Activated B cell treated with CpG ODN at 0.5 μM for 24 hours (primary cell): ENCODE measurements at regions of chr10 and their contacts with region 1.

Region 1: DNA sequence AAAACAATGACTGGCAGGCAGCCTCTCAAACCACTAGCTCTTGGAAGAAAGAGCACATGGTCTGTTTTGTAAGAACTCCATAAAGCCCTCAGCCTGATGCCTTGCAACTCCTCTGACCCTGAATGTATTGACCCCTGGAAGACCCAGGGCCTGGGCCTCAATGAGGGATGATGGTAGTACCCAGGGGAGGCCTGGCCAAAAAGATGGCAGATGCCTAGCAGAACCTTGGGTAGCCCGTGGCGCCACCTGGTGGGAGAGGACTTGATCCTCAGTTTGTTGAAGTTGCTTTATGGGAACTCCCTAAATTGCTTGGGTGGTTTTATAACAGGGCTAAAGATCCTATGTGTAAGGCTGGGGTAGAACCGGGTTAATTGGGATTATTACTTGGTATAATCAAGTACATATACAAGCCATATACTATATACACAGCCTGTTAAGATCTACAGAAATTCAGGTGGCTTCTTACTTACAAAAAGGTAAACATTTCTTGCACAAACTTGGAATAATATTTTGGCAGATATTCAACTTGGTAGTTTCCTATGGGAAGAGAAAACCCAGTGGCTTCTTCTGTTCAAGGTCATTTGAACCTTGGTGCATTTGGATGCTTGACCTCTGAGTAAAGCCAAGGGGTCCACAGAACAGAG is 95.8 kb upstream of the CACUL1 start:
- DNase-seq: peak; percentile 25
- ATAC-seq: no peak
- H3K4me3 Mint-ChIP-seq: no peak overlapping the region
- H3K27ac Mint-ChIP-seq: no peak overlapping the region
- H3K4me1 Mint-ChIP-seq: no peaks in the 10 kb centered on the region
- H3K27me3 Mint-ChIP-seq: no peaks in the 10 kb centered on the region
- CTCF ChIP-seq: no peak

Region 2: GRCh38 chr10:118720685-118721538 is 129.6 kb before region 1 on chr10:
- CTCF ChIA-PET with region 1: no interaction called
- POLR2A ChIA-PET with region 1: no interaction called
- intact Hi-C with region 1: loop called (anchors 2 kb)
- DNase-seq: no peak
- ATAC-seq: peak; percentile 56
- H3K4me3 Mint-ChIP-seq: no peak overlapping the region
- H3K27ac Mint-ChIP-seq: no peak overlapping the region
- H3K4me1 Mint-ChIP-seq: peaks cover 8% of the 10 kb centered on the region
- H3K27me3 Mint-ChIP-seq: no peaks in the 10 kb centered on the region
- CTCF ChIP-seq: peak; percentile 72

Region 3: GRCh38 chr10:118865998-118866693 is 15.6 kb after region 1 on chr10:
- CTCF ChIA-PET with region 1: no interaction called
- POLR2A ChIA-PET with region 1: no interaction called
- intact Hi-C with region 1: no loop called
- DNase-seq: no peak
- ATAC-seq: no peak
- H3K4me3 Mint-ChIP-seq: no peak overlapping the region
- H3K27ac Mint-ChIP-seq: no peak overlapping the region
- H3K4me1 Mint-ChIP-seq: no peaks in the 10 kb centered on the region
- H3K27me3 Mint-ChIP-seq: peaks cover 9% of the 10 kb centered on the region
- CTCF ChIP-seq: no peak

Region 4: GRCh38 chr10:119401671-119402395 is 551.3 kb after region 1 on chr10:
- CTCF ChIA-PET with region 1: no interaction called
- POLR2A ChIA-PET with region 1: no interaction called
- intact Hi-C with region 1: no loop called
- DNase-seq: no peak
- ATAC-seq: no peak
- H3K4me3 Mint-ChIP-seq: no peak overlapping the region
- H3K27ac Mint-ChIP-seq: peak overlapping the region; percentile 31
- H3K4me1 Mint-ChIP-seq: peaks cover 37% of the 10 kb centered on the region
- H3K27me3 Mint-ChIP-seq: no peaks in the 10 kb centered on the region
- CTCF ChIP-seq: no peak